Ovary (tissue), 10 donors: ENCODE measurements at regions of chr20 and their contacts with region 1.

Region 1: GRCh38 chr20:14553774-14554534 is 216.5 kb upstream of the FLRT3 start:
- DNase-seq: no peak
- H3K4me3 ChIP-seq: no peak overlapping the region
- H3K27ac ChIP-seq: no peak overlapping the region
- H3K4me1 ChIP-seq: no peaks in the 10 kb centered on the region
- H3K27me3 ChIP-seq: no peaks in the 10 kb centered on the region
- CTCF ChIP-seq: no peak
- EP300 ChIP-seq: no peak
- POLR2A ChIP-seq: no peak

Region 2: DNA sequence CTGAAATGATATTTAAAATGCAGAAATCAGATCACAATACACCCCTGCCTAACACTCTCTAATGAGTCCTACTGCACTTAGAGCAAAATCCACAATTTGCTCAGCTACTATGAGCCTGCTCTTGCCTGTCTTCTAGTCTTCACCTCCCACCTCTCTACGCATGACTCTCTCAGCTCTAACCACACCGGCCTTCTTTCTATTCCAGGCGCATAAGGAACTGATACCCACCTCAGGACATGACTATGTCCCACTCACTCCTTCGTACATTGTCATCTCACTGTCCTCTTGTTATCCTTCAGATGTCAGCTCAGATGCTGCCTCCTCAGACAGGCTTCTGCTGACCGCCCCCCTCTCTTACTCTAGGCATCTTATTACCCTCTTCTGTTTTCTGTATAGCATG is 15.5 kb before region 1 on chr20:
- intact Hi-C with region 1: loop called in 1 of 4 experiments (anchors 2 kb)
- DNase-seq: no peak
- H3K4me3 ChIP-seq: no peak overlapping the region
- H3K27ac ChIP-seq: no peak overlapping the region
- H3K4me1 ChIP-seq: no peaks in the 10 kb centered on the region
- H3K27me3 ChIP-seq: no peaks in the 10 kb centered on the region
- CTCF ChIP-seq: no peak
- EP300 ChIP-seq: no peak
- POLR2A ChIP-seq: no peak